ENCODE measurements at regions of chr22 and their contacts with region 1.

Region 1: GRCh38 chr22:38755911-38756532 is at the start of gene SUN2:
- DNase-seq: peak; percentile 95
- ATAC-seq: peak; percentile 73
- H3K4me3 Mint-ChIP-seq: peak within 1 kb of the TSS; percentile 87
- H3K27ac Mint-ChIP-seq: peak within 1 kb of the TSS; percentile 99
- H3K4me1 Mint-ChIP-seq: peaks cover 54% of the 10 kb centered on the region
- H3K27me3 Mint-ChIP-seq: no peaks in the 10 kb centered on the region
- CTCF ChIP-seq: no peak
- total RNA-seq, gene SUN2: 101 to 107 TPM

Region 2: GRCh38 chr22:38733329-38733723 is 22.7 kb before region 1 on chr22:
- CTCF ChIA-PET with region 1: interaction called, 39 read pairs
- POLR2A ChIA-PET with region 1: interaction called, 905 read pairs
- intact Hi-C with region 1: no loop called
- DNase-seq: peak; percentile 71
- ATAC-seq: peak; percentile 61
- H3K4me3 Mint-ChIP-seq: peak overlapping the region; percentile 3
- H3K27ac Mint-ChIP-seq: peak overlapping the region; percentile 69
- H3K4me1 Mint-ChIP-seq: peaks cover 38% of the 10 kb centered on the region
- H3K27me3 Mint-ChIP-seq: no peaks in the 10 kb centered on the region
- CTCF ChIP-seq: peak; percentile 94

Measured in activated CD8-positive, alpha-beta T cell treated with anti-CD3 and anti-CD28 coated beads for 36 hours (primary cell).